ENCODE measurements at regions of chr16 and their contacts with region 1.

Region 1: DNA sequence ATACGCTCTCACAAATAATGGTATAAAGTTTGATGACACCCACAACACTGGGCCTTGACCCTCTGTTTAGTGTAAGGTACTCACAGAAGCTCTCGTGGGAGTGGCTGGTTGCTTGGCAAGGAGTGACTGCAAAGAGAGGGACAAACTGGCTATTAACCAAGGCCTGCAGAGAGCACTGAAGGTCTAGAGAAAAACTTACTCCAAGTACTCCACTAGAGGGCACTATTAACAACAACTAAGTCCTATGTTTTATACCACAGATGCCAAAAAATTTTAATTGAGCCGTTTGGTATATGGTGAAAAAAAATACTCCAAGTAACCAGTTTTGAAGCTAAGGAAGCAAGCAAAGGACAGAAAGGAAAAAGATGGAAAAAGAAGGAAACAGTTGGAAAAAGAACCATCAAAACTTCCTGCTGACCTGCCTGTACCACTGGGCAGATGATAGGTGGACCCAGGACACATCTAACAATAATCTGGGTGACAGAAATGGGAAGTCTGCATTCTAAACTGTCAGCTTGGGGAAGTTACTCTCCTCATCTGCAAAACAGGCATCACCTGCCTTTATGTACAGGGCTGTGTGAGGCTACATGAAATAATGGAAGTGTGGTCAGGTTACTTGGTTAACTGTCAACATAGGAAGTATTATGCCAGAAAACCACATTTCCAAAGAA is 23.2 kb downstream of the DYNC1LI2 start:
- DNase-seq: peak in 4 of 5 donors; percentile 42 to 56 (median 46)
- H3K4me3 ChIP-seq: no peak overlapping the region
- H3K4me3 Mint-ChIP-seq: no peak overlapping the region
- H3K27ac ChIP-seq: no peak overlapping the region
- H3K27ac Mint-ChIP-seq: peak overlapping the region in 5 of 7 donors; percentile 12 to 73 (median 52)
- H3K4me1 ChIP-seq: no peaks in the 10 kb centered on the region
- H3K4me1 Mint-ChIP-seq: peaks cover 3 to 6% (median 5%) of the 10 kb centered on the region in 4 donors
- H3K27me3 ChIP-seq: no peaks in the 10 kb centered on the region
- H3K27me3 Mint-ChIP-seq: no peaks in the 10 kb centered on the region

Region 2: GRCh38 chr16:66549284-66550131 is 178.7 kb before region 1 on chr16 and contains the start of gene TK2:
- CTCF ChIA-PET with region 1: no interaction called
- POLR2A ChIA-PET with region 1: no interaction called
- intact Hi-C with region 1: no loop called
- DNase-seq: peak; percentile 44 to 59 (median 52)
- H3K4me3 ChIP-seq: peak within 1 kb of the TSS; percentile 63 to 70
- H3K4me3 Mint-ChIP-seq: peak within 1 kb of the TSS; percentile 78 to 98 (median 82)
- H3K27ac ChIP-seq: peak within 1 kb of the TSS; percentile 77
- H3K27ac Mint-ChIP-seq: peak within 1 kb of the TSS; percentile 88 to 97 (median 93)
- H3K4me1 ChIP-seq: peaks cover 63% of the 10 kb centered on the region
- H3K4me1 Mint-ChIP-seq: peaks cover 45 to 68% (median 56%) of the 10 kb centered on the region in 4 donors
- H3K27me3 ChIP-seq: no peaks in the 10 kb centered on the region
- H3K27me3 Mint-ChIP-seq: no peaks in the 10 kb centered on the region
- total RNA-seq, gene TK2: 9.0 to 10.2 TPM

Region 3: DNA sequence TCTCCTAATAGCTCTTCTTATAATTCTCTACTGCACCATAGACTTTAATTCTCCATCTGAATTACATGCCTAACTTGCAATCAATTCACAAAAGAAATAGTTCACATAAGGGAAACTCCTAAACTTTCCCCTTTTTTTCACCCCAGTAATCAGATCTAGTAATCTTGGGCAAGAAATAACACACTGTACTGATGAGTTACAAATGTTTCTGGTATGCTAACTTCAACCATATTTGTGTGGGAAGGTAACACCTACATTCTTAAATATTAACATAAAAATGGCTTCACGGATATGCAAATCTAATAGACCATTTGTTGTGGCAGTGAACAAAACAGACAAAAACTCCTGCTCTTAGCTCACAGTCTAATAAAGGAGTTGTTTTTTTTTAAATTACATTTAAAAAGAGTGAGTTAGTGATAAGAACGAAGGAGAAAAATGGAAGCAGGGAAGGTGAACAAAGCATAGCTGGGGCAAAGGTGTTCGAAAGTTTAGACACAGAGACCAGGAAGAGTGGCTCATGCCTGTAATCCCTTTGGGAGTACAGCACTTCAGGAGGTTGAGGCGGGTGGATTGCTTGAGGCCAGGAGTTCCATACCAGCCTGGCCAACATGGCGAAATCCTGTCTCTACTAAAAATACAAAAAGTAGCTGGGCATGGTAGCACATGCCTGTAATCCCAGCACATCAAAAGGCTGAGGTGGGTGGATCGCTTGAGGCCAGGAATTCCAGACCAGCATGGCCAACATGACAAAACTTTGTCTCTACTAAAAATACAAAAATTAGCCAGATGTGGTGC is 89.0 kb before region 1 on chr16:
- CTCF ChIA-PET with region 1: no interaction called
- POLR2A ChIA-PET with region 1: no interaction called
- intact Hi-C with region 1: no loop called
- DNase-seq: no peak
- H3K4me3 ChIP-seq: no peak overlapping the region
- H3K4me3 Mint-ChIP-seq: no peak overlapping the region
- H3K27ac ChIP-seq: no peak overlapping the region
- H3K27ac Mint-ChIP-seq: no peak overlapping the region
- H3K4me1 ChIP-seq: no peaks in the 10 kb centered on the region
- H3K4me1 Mint-ChIP-seq: no peaks in the 10 kb centered on the region
- H3K27me3 ChIP-seq: no peaks in the 10 kb centered on the region
- H3K27me3 Mint-ChIP-seq: peaks cover 0 to 3% of the 10 kb centered on the region in 2 donors

Region 4: DNA sequence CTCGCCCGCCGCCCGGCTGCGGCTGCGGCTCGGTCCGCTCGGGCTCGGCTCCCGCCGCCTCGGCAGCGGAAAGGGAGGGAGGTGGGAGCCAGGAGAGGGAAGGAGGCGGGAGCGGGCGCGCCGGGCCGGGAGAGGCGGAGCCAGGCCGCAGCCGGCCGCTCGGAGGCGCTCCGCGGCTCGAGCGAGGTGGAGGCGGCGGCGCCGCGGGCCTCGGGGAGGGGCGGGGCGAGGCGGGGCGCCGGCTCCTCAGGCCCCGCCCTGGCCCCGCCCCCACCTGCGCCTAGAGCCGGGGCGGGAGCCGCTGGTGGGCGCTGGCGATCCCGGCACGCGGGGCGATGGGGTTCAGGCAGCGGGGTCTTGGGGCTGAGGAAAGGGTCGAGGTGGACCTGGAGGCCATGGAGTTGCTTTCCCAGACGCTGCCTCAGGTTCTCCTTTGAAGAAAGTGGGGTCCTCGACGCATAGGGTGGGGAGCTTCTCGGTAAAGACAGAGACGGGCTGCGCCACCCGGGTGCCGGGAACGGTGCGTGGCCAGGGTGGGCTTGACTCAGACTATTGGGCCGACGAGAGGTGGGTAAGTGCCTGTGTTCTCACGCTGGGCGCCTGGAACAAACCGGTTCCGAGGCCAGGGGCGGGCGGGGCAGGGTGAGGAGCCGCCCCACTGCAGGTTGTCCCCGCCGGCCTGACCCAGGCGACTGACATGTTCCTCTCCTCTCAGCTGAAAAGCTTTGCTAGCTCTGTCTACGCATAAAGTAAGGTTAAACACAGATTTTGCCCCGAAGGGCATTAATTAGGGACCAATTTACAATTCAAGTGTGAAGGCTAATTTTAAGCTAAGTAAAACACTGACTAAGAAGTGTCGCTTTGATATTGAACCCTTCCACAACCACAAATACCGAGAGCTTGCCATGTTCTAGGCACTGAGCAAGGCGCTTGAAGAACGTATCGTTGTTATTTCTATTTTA is 31.3 kb before region 1 on chr16 and contains the start of gene CMTM4:
- CTCF ChIA-PET with region 1: interaction called, 7 read pairs
- POLR2A ChIA-PET with region 1: no interaction called
- intact Hi-C with region 1: loop called (anchors 2 kb)
- DNase-seq: peak; percentile 68 to 80 (median 72)
- H3K4me3 ChIP-seq: peak within 1 kb of the TSS in 1 of 2 donors; percentile 57
- H3K4me3 Mint-ChIP-seq: peak within 1 kb of the TSS; percentile 78 to 87 (median 85)
- H3K27ac ChIP-seq: peak within 1 kb of the TSS; percentile 27
- H3K27ac Mint-ChIP-seq: peak within 1 kb of the TSS in 5 of 7 donors; percentile 23 to 78 (median 66)
- H3K4me1 ChIP-seq: peaks cover 8% of the 10 kb centered on the region
- H3K4me1 Mint-ChIP-seq: peaks cover 5 to 20% (median 12%) of the 10 kb centered on the region in 4 donors
- H3K27me3 ChIP-seq: no peaks in the 10 kb centered on the region
- H3K27me3 Mint-ChIP-seq: peaks cover 0 to 5% of the 10 kb centered on the region in 2 donors
- total RNA-seq, gene CMTM4: 2.0 to 2.2 TPM

Region 5: DNA sequence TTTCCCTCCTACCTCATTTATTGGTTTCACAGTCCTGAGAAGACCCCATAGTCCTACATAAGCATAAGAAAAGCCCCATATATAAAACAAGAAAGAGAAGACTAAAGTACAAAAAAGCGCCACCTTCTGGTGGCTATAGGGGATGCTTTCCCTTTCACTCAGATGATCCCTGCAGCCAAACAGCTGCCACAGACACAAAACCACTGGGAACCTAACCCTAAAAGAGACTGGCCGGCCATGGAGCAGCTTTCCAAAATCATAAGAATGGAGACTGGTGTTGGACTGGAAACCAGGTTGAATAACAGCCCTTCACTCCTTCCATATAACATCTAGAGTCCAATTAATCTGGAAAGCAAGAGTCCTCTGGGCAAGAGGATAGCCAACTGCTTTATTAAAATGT is 11.8 kb after region 1 on chr16:
- CTCF ChIA-PET with region 1: interaction called, 76 read pairs
- POLR2A ChIA-PET with region 1: no interaction called
- intact Hi-C with region 1: no loop called
- DNase-seq: peak in 4 of 5 donors; percentile 14 to 31 (median 28)
- H3K4me3 ChIP-seq: no peak overlapping the region
- H3K4me3 Mint-ChIP-seq: peak overlapping the region in 1 of 8 donors; percentile 47
- H3K27ac ChIP-seq: no peak overlapping the region
- H3K27ac Mint-ChIP-seq: peak overlapping the region in 5 of 7 donors; percentile 30 to 77 (median 49)
- H3K4me1 ChIP-seq: peaks cover 18% of the 10 kb centered on the region
- H3K4me1 Mint-ChIP-seq: peaks cover 13 to 24% (median 16%) of the 10 kb centered on the region in 4 donors
- H3K27me3 ChIP-seq: no peaks in the 10 kb centered on the region
- H3K27me3 Mint-ChIP-seq: no peaks in the 10 kb centered on the region

Region 6: DNA sequence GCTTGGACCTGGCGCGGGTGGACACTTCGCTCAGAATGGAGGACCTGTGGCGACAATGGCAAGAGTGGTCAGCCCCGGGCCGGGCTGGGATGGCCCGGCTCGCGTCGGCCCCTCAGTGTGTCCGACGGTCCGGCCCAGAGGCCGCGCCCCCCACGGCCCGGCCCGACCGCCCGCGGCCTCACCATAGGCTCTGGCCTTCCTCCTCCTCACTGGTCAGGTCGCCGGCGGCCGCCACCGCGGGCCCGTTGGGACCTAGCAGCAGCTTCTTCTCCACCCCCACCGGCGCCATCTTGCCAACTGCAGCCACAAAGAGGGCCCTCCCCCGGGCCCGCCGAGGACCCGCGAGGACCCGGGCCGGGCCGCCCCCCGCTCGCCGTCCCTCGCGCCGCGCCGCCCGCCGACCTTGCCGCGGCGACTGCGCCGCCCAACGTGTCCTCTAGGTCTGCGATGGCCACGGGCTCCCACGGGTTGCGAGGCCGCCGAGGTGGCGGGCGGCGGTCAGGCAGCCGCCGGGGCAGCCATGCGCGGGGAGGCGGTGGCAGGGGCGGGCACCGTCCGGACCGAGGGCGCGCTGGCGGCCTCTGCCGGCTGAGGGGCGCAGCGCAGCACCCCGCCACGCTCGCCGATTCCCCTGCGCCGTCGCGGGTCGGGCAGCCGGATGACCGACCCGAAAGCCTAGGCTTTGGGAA is 23.2 kb after region 1 on chr16 and contains the start of gene DYNC1LI2:
- CTCF ChIA-PET with region 1: interaction called, 13 read pairs
- POLR2A ChIA-PET with region 1: interaction called, 8 read pairs
- intact Hi-C with region 1: no loop called
- DNase-seq: peak; percentile 82 to 91 (median 87)
- H3K4me3 ChIP-seq: peak within 1 kb of the TSS; percentile 64 to 73
- H3K4me3 Mint-ChIP-seq: peak within 1 kb of the TSS; percentile 91 to 95 (median 93)
- H3K27ac ChIP-seq: peak within 1 kb of the TSS; percentile 85
- H3K27ac Mint-ChIP-seq: peak within 1 kb of the TSS; percentile 85 to 95 (median 94)
- H3K4me1 ChIP-seq: peaks cover 34% of the 10 kb centered on the region
- H3K4me1 Mint-ChIP-seq: peaks cover 31 to 46% (median 37%) of the 10 kb centered on the region in 4 donors
- H3K27me3 ChIP-seq: no peaks in the 10 kb centered on the region
- H3K27me3 Mint-ChIP-seq: peaks cover 0 to 4% of the 10 kb centered on the region in 2 donors
- total RNA-seq, gene DYNC1LI2: 73.2 to 78.1 TPM